ENCODE measurements at regions of chr6 and their contacts with region 1.

Region 1: GRCh38 chr6:168201383-168201782 is 118.2 kb downstream of the DACT2 start:
- DNase-seq: no peak
- H3K4me3 ChIP-seq: no peak overlapping the region
- H3K27ac ChIP-seq: no peak overlapping the region
- H3K4me1 ChIP-seq: no peaks in the 10 kb centered on the region
- H3K27me3 ChIP-seq: no peaks in the 10 kb centered on the region
- CTCF ChIP-seq: peak; percentile 61 to 85 (median 72)
- EP300 ChIP-seq: no peak; a peak in 1 of 3 replicates
- POLR2A ChIP-seq: no peak
- RAD21 ChIP-seq: peak; percentile 81 to 92

Region 2: DNA sequence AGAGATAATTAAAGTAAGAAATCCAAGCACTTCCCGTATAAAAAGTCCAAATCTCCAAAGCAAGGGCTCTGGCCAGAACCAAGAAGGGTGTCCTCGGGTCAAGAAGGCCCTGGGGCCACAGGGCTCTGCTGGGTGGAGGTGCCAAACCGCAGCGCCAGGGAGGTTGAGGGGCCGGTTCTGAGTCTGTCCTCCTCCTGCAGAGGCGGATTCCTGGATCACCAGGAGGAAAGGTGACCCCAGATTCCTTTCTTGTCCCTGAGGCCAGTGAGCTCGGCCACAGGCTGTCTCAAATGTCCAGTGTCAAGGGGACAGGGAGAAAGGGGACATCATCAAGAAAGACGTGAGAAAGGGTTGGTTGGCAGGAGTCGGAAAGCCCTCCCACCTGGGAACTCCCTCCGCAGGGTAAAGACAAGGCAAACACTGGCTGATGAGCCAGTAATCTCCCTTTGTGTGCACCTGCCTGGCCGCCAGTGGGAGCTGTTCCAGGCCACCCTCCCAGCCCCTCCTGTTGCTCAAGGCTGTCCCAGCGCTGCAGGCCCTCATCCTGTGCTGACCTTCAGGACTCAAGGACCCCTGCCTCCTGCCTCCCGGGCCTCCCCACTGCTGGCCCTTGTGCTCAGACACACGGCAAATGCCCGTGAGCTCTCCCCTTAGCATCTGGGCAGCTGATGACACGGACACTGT is 129.9 kb before region 1 on chr6:
- CTCF ChIA-PET with region 1: no interaction called
- POLR2A ChIA-PET with region 1: no interaction called
- DNase-seq: peak in 1 of 2 experiments; percentile 74
- H3K4me3 ChIP-seq: no peak overlapping the region
- H3K27ac ChIP-seq: no peak overlapping the region
- H3K4me1 ChIP-seq: peaks cover 0 to 6% (median 1%) of the 10 kb centered on the region in 4 experiments; a peak in 2 of 7 replicates
- H3K27me3 ChIP-seq: no peaks in the 10 kb centered on the region
- CTCF ChIP-seq: peak; percentile 82 to 92 (median 89)
- EP300 ChIP-seq: no peak
- POLR2A ChIP-seq: no peak
- RAD21 ChIP-seq: peak; percentile 51 to 68

Region 3: DNA sequence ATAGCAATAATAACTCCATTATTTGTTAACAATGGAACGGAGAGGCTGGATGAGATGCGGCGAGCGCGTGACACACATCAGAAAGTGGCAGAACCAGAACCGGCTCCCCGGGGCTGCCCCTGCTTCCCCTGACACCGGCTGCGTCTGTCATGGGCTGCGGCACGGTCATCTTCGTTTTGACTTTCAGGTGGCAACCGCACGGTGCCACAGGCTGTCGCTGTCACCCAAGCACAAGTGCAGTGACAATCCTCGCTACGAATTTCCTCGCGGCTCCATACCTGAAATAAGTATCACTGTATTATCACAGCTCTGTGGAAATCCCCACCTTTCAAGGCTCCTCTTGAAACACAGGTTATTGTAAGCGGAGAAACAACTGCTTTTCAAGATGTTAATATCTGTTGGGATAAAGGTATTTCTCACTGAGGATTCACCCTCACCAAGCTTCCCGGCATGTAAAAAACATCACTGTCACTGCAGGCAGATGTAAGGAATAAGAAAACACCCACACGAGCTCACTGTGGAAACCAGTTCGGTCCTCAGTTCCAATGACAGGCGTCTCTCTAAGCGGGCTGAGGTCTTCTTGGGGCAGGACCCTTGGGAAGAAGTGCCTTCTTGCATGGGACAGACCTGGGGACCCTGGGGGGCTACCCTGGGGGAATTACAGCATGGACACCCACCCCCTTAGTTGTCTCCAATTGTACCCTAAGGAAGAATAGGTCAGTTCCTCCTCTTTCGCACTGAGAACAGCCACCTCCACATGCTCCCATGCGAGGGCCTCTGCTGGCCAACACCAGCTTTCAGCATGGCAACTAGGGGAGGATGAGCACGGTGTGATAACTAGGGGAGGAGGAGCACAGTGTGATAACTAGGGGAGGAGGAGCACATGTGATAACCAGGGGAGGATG is 31.8 kb after region 1 on chr6:
- CTCF ChIA-PET with region 1: interaction called, 11 read pairs
- POLR2A ChIA-PET with region 1: no interaction called
- DNase-seq: no peak
- H3K4me3 ChIP-seq: no peak overlapping the region
- H3K27ac ChIP-seq: no peak overlapping the region
- H3K4me1 ChIP-seq: peaks cover 0 to 5% (median 2%) of the 10 kb centered on the region in 4 experiments; a peak in 4 of 7 replicates
- H3K27me3 ChIP-seq: no peaks in the 10 kb centered on the region; a peak in 1 of 7 replicates
- CTCF ChIP-seq: peak in 2 of 3 experiments; percentile 25 to 51; a peak in 2 of 4 replicates
- EP300 ChIP-seq: no peak
- POLR2A ChIP-seq: no peak
- RAD21 ChIP-seq: peak; percentile 14 to 45; a peak in 3 of 4 replicates

Measured in H1 (cell line).